SK-N-SH (cell line): ENCODE measurements at regions of chr20 and their contacts with region 1.

Region 1: DNA sequence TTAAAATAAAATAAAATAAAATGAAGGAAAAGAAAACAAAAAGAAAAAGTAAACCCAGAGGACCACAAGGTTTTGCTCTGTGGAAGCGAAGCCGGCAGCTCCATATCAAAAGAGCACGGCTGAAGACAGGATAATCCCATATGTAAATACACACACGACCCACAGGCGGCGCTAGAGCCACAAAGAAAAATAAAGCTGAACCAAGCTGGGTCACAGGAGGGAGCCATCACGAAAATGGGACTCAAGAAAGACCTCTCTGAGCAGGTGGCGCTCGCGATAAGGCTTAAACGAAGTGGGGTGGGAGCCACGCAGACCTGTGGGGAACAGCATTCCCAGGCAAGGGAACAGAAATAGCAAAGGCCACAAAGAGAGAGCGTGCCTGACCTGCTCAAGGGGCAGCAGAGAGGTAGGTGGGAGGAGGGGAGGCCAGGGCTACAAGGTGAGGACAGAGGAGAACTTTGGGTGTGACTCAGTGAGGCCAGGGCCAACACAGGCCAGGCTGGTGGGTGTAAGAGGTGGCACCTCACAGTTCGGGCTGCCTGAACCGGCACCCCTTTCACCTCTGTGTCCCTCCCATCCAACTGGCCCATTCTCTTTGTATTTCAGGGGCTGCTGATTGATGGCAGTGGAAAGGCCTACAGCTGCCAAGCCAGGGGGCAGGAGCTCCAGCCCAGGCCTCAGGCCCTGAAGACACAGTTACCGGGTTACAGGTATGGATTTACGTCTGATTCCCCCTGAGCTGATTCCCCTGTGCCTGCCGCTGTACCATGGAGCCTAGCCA is 26.0 kb downstream of the PTGIS start:
- DNase-seq: peak; percentile 78
- H3K4me3 ChIP-seq: no peak overlapping the region; a peak in 1 of 4 replicates
- H3K27ac ChIP-seq: no peak overlapping the region
- H3K4me1 ChIP-seq: no peaks in the 10 kb centered on the region
- H3K27me3 ChIP-seq: no peaks in the 10 kb centered on the region
- CTCF ChIP-seq: peak; percentile 78
- EP300 ChIP-seq: no peak
- RAD21 ChIP-seq: peak; percentile 89

Region 2: GRCh38 chr20:49338061-49338460 is 203.9 kb before region 1 on chr20:
- CTCF ChIA-PET with region 1: interaction called, 104 read pairs
- POLR2A ChIA-PET with region 1: no interaction called
- DNase-seq: no peak
- H3K4me3 ChIP-seq: no peak overlapping the region
- H3K27ac ChIP-seq: no peak overlapping the region
- H3K4me1 ChIP-seq: peaks cover 0 to 2% of the 10 kb centered on the region in 2 experiments; a peak in 1 of 4 replicates
- H3K27me3 ChIP-seq: no peaks in the 10 kb centered on the region
- CTCF ChIP-seq: no peak
- EP300 ChIP-seq: no peak
- RAD21 ChIP-seq: no peak

Region 3: GRCh38 chr20:49562311-49563014 is 20.5 kb after region 1 on chr20:
- CTCF ChIA-PET with region 1: interaction called, 126 read pairs
- POLR2A ChIA-PET with region 1: no interaction called
- DNase-seq: no peak
- H3K4me3 ChIP-seq: no peak overlapping the region
- H3K27ac ChIP-seq: no peak overlapping the region
- H3K4me1 ChIP-seq: peaks cover 2 to 4% of the 10 kb centered on the region in 2 experiments; a peak in 1 of 4 replicates
- H3K27me3 ChIP-seq: no peaks in the 10 kb centered on the region
- CTCF ChIP-seq: no peak
- EP300 ChIP-seq: peak in 1 of 2 experiments; percentile 55; a peak in 1 of 4 replicates
- RAD21 ChIP-seq: no peak

Region 4: GRCh38 chr20:49583669-49584417 is 41.9 kb after region 1 on chr20:
- CTCF ChIA-PET with region 1: interaction called, 19 read pairs
- POLR2A ChIA-PET with region 1: no interaction called
- DNase-seq: no peak
- H3K4me3 ChIP-seq: no peak overlapping the region
- H3K27ac ChIP-seq: no peak overlapping the region; a peak in 1 of 4 replicates
- H3K4me1 ChIP-seq: peaks cover 0 to 10% of the 10 kb centered on the region in 2 experiments; a peak in 2 of 4 replicates
- H3K27me3 ChIP-seq: no peaks in the 10 kb centered on the region
- CTCF ChIP-seq: no peak
- EP300 ChIP-seq: no peak
- RAD21 ChIP-seq: no peak

Region 5: DNA sequence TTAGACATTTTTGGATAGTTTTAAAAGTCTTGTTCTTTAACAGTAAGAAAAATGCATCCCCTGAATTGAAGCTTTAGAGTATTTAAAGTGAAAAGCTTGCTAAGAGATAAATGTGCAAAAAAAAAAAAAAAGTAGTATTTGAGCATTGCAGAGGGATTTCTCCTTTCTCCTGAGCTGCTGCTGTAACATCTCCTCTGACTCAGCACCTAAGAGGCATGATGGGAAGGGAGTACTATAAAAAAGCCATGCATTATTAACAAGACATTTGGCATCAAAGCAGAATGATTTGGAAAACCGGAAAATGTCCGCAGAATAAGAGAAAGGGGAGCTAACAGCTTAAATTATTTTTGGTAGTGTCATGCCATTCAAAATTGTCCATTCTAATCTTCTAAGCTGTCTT is 143.9 kb after region 1 on chr20:
- CTCF ChIA-PET with region 1: no interaction called
- POLR2A ChIA-PET with region 1: no interaction called
- DNase-seq: no peak
- H3K4me3 ChIP-seq: no peak overlapping the region
- H3K27ac ChIP-seq: peak overlapping the region; percentile 4 to 65; a peak in 2 of 4 replicates
- H3K4me1 ChIP-seq: peaks cover 4 to 35% of the 10 kb centered on the region in 2 experiments
- H3K27me3 ChIP-seq: no peaks in the 10 kb centered on the region
- CTCF ChIP-seq: no peak
- EP300 ChIP-seq: peak in 1 of 2 experiments; percentile 16; a peak in 1 of 4 replicates
- RAD21 ChIP-seq: no peak

Region 6: DNA sequence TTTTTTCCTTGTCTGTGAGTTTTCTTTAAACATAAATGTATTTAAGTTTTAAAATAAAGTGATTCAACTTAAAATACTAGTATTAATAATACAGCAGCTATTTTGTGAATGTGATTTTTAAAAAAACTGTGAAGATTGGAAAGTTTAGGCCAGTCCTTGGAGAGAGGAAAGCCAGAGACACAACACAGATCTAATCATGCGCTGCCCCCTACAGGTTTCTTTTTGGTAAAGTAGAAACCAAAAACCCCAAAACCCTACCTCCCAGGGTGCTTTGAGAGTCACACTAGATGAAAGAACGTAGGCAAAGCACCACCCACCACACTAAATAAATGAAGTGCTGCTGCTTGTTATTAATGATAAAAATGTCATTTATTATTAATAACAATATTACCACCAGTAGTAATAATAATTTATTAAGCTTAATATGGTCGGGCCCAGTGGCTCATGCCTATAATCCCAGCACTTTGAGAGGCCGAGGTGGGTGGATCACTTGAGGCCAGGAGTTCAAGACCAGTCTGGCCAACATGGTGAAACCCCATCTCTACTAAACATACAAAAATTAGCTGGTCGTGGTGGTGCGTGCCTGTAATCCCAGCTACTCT is 304.4 kb after region 1 on chr20:
- CTCF ChIA-PET with region 1: interaction called, 47 read pairs
- POLR2A ChIA-PET with region 1: no interaction called
- DNase-seq: peak; percentile 65
- H3K4me3 ChIP-seq: no peak overlapping the region
- H3K27ac ChIP-seq: no peak overlapping the region
- H3K4me1 ChIP-seq: peaks cover 0 to 11% of the 10 kb centered on the region in 2 experiments; a peak in 2 of 4 replicates
- H3K27me3 ChIP-seq: no peaks in the 10 kb centered on the region
- CTCF ChIP-seq: peak; percentile 75
- EP300 ChIP-seq: no peak
- RAD21 ChIP-seq: peak; percentile 88

Region 7: DNA sequence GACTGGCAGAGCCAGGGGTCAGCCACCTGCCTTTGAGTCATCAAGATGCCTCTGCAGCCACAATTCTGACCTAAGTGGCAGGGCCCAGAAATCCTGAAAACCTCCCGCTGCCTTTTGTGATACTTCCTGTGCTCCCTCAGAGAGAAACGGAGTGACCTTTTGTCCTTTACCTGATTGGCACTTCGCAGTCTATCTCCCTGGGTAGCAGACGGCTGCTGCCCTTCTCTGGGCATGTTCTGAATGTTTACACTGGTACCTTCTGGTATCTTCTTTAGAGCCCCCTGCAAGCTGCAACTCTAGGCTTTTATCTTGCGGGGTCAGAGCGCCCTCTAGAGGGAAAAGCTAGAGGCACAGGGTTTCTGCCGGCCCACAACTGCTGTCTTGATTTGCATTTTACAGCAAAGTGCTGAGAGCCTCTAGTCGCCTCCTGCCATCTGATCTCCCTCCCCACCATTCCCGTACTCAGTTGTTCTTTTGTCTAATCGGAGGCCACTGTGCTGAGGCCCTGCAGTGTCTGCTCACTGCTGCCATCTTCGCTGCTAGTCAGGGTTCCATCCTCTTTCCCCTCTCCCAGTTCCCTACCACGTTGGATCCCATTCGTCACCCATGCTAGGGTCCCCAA is 346.5 kb after region 1 on chr20:
- CTCF ChIA-PET with region 1: interaction called, 29 read pairs
- POLR2A ChIA-PET with region 1: no interaction called
- DNase-seq: peak; percentile 85
- H3K4me3 ChIP-seq: peak overlapping the region in 1 of 2 experiments; percentile 55; a peak in 1 of 4 replicates
- H3K27ac ChIP-seq: no peak overlapping the region; a peak in 1 of 4 replicates
- H3K4me1 ChIP-seq: peaks cover 0 to 8% of the 10 kb centered on the region in 2 experiments; a peak in 1 of 4 replicates
- H3K27me3 ChIP-seq: no peaks in the 10 kb centered on the region
- CTCF ChIP-seq: peak; percentile 95
- EP300 ChIP-seq: peak in 1 of 2 experiments; percentile 37; a peak in 1 of 4 replicates
- RAD21 ChIP-seq: peak; percentile 87

Region 8: GRCh38 chr20:50320910-50321796 is 779.2 kb after region 1 on chr20:
- CTCF ChIA-PET with region 1: no interaction called
- POLR2A ChIA-PET with region 1: no interaction called
- DNase-seq: peak; percentile 69
- H3K4me3 ChIP-seq: peak overlapping the region; percentile 39 to 44; a peak in 3 of 4 replicates
- H3K27ac ChIP-seq: peak overlapping the region; percentile 50 to 80
- H3K4me1 ChIP-seq: peaks cover 16% of the 10 kb centered on the region in 2 experiments; a peak in 3 of 4 replicates
- H3K27me3 ChIP-seq: no peaks in the 10 kb centered on the region
- CTCF ChIP-seq: no peak
- EP300 ChIP-seq: peak in 1 of 2 experiments; percentile 37; a peak in 1 of 4 replicates
- RAD21 ChIP-seq: no peak